PC-9 (cell line): ENCODE measurements at regions of chr20 and their contacts with region 1.

Region 1: DNA sequence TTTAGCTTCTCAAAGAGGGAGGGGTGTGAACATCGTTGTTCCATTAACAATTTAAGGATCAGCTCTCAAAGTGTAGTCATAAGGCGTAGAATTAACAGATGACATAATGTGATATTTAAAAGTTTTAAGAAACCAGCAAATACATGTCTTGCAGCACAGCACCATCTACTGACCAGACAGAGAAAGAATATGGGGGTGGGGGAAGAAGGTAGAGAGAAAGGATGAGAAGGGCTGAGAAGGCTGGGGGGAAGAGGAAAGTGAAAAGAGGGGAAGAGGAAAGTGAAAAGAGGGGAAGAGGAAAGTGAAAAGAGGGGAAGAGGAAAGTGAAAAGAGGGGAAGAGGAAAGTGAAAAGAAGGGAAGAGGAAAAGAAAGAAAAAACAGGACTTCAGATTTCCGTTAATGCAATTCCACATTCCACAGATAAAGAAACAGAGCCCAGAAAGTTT is 80.9 kb downstream of the HAO1 start:
- DNase-seq: no peak
- H3K4me3 ChIP-seq: no peak overlapping the region
- H3K27ac ChIP-seq: no peak overlapping the region
- H3K4me1 ChIP-seq: no peaks in the 10 kb centered on the region
- H3K27me3 ChIP-seq: no peaks in the 10 kb centered on the region
- CTCF ChIP-seq: peak; percentile 76

Region 2: DNA sequence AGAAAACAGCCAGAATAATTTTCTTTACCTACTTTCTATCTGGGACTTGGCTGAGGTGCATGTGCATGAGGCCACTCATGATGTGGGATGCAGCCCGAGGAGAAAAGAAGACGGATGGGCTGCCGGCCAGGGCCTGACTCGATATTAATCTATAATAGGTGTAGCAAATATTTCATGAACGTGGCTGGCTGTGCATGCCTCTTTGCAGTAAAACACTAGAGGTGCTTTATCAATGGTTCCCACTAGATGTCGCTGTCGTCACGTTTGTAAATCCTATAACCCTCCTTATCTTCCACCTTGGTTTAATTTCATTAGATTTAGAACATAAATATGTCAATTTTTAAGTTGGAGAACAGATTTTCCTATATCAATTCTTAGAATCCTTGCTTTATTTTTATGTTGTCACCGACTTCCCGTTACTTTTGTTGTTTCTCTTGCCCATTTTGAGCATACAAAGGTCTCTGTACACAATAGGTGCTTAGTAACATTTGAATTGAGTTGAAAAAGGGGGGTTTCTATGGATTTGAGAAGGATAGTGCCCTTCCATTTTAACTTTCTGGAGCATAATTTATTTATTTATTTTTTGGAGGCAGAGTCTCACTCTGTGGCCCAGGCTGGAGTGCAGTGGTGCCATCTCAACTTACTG is 1716.9 kb before region 1 on chr20:
- CTCF ChIA-PET with region 1: no interaction called
- POLR2A ChIA-PET with region 1: no interaction called
- intact Hi-C with region 1: loop called (anchors 10 kb)
- DNase-seq: peak in 1 of 2 experiments; percentile 33
- H3K4me3 ChIP-seq: no peak overlapping the region
- H3K27ac ChIP-seq: no peak overlapping the region
- H3K4me1 ChIP-seq: no peaks in the 10 kb centered on the region
- H3K27me3 ChIP-seq: no peaks in the 10 kb centered on the region
- CTCF ChIP-seq: peak; percentile 89

Region 3: GRCh38 chr20:6583134-6583738 is 1276.1 kb before region 1 on chr20:
- CTCF ChIA-PET with region 1: no interaction called
- POLR2A ChIA-PET with region 1: no interaction called
- intact Hi-C with region 1: loop called (anchors 5 kb)
- DNase-seq: peak in 1 of 2 experiments; percentile 4
- H3K4me3 ChIP-seq: no peak overlapping the region
- H3K27ac ChIP-seq: no peak overlapping the region
- H3K4me1 ChIP-seq: no peaks in the 10 kb centered on the region
- H3K27me3 ChIP-seq: no peaks in the 10 kb centered on the region
- CTCF ChIP-seq: peak; percentile 75

Region 4: DNA sequence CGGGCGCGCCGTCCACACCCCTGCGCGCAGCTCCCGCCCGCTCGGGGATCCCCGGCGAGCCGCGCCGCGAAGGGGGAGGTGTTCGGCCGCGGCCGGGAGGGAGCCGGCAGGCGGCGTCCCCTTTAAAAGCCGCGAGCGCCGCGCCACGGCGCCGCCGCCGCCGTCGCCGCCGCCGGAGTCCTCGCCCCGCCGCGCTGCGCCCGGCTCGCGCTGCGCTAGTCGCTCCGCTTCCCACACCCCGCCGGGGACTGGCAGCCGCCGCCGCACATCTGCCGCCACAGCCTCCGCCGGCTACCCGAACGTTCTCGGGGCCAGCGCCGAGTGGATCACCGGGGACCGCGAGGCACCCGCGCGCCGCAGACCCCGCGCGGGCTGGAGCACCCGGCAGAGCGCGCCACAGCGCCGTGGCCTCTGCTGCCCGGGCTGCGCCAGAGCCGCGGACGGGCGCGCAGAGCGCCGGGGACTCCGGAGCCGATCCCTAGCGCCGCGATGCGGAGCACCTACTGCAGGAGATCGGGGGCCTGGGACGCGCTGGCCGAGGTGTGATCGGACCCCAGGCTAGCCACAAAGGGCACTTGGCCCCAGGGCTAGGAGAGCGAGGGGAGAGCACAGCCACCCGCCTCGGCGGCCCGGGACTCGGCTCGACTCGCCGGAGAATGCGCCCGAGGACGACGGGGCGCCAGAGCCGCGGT is 1091.7 kb before region 1 on chr20 and contains the start of gene BMP2:
- CTCF ChIA-PET with region 1: no interaction called
- POLR2A ChIA-PET with region 1: no interaction called
- intact Hi-C with region 1: loop called (anchors 5 kb)
- DNase-seq: no peak
- H3K4me3 ChIP-seq: no peak within 1 kb of the TSS; the same call in 1 of the 2 replicates
- H3K27ac ChIP-seq: no peak within 1 kb of the TSS
- H3K4me1 ChIP-seq: no peaks in the 10 kb centered on the region
- H3K27me3 ChIP-seq: no peaks in the 10 kb centered on the region; the same call in 1 of the 2 replicates
- CTCF ChIP-seq: no peak
- total RNA-seq, gene BMP2: not detected in 2 replicates

Region 5: GRCh38 chr20:6828794-6829423 is 1030.5 kb before region 1 on chr20:
- CTCF ChIA-PET with region 1: no interaction called
- POLR2A ChIA-PET with region 1: no interaction called
- intact Hi-C with region 1: loop called (anchors 2 kb)
- DNase-seq: peak in 1 of 2 experiments; percentile 13
- H3K4me3 ChIP-seq: no peak overlapping the region
- H3K27ac ChIP-seq: no peak overlapping the region
- H3K4me1 ChIP-seq: no peaks in the 10 kb centered on the region
- H3K27me3 ChIP-seq: no peaks in the 10 kb centered on the region; the same call in 1 of the 2 replicates
- CTCF ChIP-seq: peak; percentile 80

Region 6: DNA sequence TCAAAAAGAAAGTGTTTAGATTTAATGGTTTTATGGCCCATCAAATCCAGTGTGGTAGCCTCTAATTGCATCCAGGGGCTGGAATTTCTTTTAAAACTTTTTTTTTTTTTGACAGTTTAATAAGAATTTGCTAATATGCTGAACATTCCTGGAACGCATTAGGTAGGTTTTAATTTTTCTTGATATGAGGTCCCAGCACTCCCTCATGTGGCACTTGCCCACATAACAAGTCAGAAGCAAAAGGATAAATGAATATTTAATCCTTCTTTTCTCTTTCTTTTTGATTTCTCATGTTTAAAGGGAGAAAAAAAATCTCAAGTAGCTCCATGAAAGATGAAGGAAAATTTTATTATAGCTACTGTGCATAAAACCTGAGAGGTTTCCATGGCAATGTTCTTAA is 67.4 kb after region 1 on chr20:
- CTCF ChIA-PET with region 1: no interaction called
- POLR2A ChIA-PET with region 1: no interaction called
- intact Hi-C with region 1: no loop called
- DNase-seq: no peak
- H3K4me3 ChIP-seq: no peak overlapping the region
- H3K27ac ChIP-seq: no peak overlapping the region
- H3K4me1 ChIP-seq: no peaks in the 10 kb centered on the region
- H3K27me3 ChIP-seq: no peaks in the 10 kb centered on the region
- CTCF ChIP-seq: peak; percentile 64

Region 7: DNA sequence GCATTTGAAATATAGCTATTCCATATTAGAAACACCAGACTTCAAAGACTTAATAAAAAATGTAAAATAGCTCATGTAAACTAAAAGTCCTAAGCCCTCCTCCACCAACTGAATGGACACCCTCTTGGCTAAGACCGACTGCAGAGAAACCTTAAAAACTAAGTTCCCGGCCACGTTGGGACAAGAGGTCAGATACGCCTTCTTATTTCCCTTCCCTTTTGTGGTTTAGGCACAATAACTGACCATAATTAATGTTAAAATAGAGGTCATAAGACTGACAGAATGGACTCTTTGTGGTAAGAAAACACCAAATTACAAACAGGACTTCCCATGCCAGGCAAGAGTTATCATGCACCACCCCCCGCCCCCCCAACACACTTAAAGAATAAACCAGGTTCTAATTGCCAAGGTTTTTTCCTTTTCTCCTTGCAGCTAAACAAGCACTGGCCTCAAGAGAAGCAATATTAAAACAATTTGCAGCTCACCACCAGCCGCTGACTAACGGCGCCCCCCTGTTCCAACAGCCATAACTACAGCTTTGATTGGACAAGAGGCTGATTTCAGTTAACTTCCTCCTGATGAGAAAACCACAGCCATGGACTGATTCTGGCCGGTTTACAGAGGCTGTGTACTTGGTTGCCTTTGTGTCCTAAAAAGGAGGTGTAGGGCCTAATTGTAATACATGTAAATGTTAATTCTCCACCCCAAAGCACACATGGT is 1644.3 kb after region 1 on chr20:
- CTCF ChIA-PET with region 1: no interaction called
- POLR2A ChIA-PET with region 1: no interaction called
- intact Hi-C with region 1: no loop called
- DNase-seq: no peak
- H3K4me3 ChIP-seq: no peak overlapping the region
- H3K27ac ChIP-seq: no peak overlapping the region
- H3K4me1 ChIP-seq: no peaks in the 10 kb centered on the region
- H3K27me3 ChIP-seq: peaks cover 56% of the 10 kb centered on the region
- CTCF ChIP-seq: no peak